ENCODE measurements at regions of chr3 and their contacts with region 1.

Region 1: GRCh38 chr3:185558395-185558794 is 6.0 kb upstream of the LIPH start:
- DNase-seq: no peak
- H3K4me3 Mint-ChIP-seq: no peak overlapping the region
- H3K27ac Mint-ChIP-seq: no peak overlapping the region
- H3K4me1 Mint-ChIP-seq: peaks cover 13% of the 10 kb centered on the region
- H3K27me3 Mint-ChIP-seq: peaks cover 2% of the 10 kb centered on the region

Region 2: DNA sequence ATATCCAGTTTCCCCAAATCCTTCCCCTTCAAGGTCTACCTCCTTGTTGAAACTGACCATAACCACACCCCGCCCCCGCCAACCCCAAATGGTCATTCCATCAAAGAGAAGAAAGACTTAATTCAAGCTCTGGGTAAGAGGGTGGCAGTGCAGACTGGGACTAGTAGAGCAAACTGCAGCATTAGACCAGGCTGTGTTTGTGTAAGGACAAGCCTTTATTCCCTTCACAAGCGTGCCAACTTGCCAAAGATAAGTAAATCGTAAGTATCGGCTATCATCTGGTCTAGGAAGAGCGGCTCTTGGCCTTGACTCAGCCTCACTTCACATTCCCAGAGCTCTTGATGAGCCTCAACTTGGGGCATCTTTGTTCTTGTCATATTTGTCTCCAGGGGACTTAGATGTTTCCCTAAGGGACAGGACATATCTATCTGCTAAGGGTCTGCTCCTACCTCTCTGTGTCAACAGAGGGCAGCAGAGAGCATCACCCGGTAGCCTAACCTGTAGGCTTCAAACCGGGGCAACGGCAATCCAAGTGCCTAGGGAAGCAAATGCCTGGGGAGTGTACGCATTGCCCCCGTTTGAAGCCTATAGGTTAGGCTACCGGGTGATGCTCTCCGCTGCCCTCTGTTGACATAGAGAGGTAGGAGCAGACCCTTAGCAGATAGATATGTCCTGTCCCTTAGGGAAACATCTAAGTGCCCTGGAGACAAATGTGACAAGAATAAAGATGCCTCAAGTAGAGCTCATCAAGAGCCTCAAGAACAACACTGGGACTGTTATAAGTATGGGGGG is 204.4 kb before region 1 on chr3:
- CTCF ChIA-PET with region 1: interaction called, 5 read pairs
- intact Hi-C with region 1: loop called (anchors 1 kb)
- DNase-seq: peak; percentile 83
- H3K4me3 Mint-ChIP-seq: no peak overlapping the region
- H3K27ac Mint-ChIP-seq: no peak overlapping the region
- H3K4me1 Mint-ChIP-seq: no peaks in the 10 kb centered on the region
- H3K27me3 Mint-ChIP-seq: peaks cover 24% of the 10 kb centered on the region

Region 3: GRCh38 chr3:185460719-185461350 is 97.6 kb before region 1 on chr3:
- CTCF ChIA-PET with region 1: interaction called, 12 read pairs
- intact Hi-C with region 1: loop called (anchors 1 kb)
- DNase-seq: no peak
- H3K4me3 Mint-ChIP-seq: no peak overlapping the region
- H3K27ac Mint-ChIP-seq: no peak overlapping the region
- H3K4me1 Mint-ChIP-seq: no peaks in the 10 kb centered on the region
- H3K27me3 Mint-ChIP-seq: no peaks in the 10 kb centered on the region

Region 4: DNA sequence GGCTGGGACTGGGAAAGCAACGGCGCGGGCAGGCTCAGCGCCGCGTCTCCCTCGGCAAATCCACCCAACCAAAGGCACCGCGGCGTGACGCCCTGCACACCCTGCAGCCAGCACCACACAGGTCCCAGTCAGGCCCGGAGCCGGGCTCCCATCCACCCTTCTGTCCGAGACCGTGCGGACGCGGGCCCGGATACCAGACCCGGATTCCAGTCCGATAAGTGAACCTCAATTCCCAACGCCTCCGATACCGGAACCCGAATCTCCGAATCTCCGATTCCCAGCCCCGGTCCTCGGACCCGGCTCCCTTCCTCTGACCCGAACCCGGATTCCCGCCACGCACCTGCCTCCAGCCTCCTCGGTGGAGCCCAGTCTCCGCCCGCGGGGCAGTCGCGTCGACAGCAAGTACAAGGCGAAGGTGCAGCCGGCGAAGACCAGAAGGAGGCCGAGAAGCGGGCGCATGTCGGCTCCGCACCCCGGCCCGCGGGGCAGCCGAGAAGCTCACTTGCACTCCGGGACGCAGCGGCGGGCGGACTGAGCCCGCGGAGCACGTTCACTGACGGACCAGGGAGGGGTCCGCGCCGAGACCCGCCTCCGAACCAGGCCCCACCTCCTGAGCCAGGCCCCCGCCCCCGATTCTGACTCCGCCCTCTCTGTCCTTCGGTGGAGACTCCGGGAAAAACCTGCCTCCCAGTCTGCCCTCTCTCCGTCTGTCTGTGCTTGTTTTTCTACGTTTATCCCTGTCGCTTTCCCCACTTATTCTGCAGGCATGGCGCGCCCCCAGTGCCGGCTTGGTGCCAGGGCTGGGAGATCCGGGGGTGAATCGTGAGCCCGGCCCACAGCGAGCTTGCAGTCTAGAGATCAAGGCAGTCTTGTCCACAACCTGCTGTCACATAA is 59.6 kb before region 1 on chr3 and contains the start of gene TMEM41A:
- CTCF ChIA-PET with region 1: interaction called, 7 read pairs
- intact Hi-C with region 1: loop called (anchors 1 kb)
- DNase-seq: peak; percentile 94
- H3K4me3 Mint-ChIP-seq: peak within 1 kb of the TSS; percentile 89
- H3K27ac Mint-ChIP-seq: peak within 1 kb of the TSS; percentile 78
- H3K4me1 Mint-ChIP-seq: peaks cover 17% of the 10 kb centered on the region
- H3K27me3 Mint-ChIP-seq: no peaks in the 10 kb centered on the region
- total RNA-seq, gene TMEM41A: 13.1 to 14.6 TPM

Region 5: GRCh38 chr3:185572183-185572582 is 13.8 kb after region 1 on chr3:
- CTCF ChIA-PET with region 1: interaction called, 12 read pairs
- intact Hi-C with region 1: no loop called
- DNase-seq: no peak
- H3K4me3 Mint-ChIP-seq: no peak overlapping the region
- H3K27ac Mint-ChIP-seq: no peak overlapping the region
- H3K4me1 Mint-ChIP-seq: peaks cover 2% of the 10 kb centered on the region
- H3K27me3 Mint-ChIP-seq: no peaks in the 10 kb centered on the region

Region 6: DNA sequence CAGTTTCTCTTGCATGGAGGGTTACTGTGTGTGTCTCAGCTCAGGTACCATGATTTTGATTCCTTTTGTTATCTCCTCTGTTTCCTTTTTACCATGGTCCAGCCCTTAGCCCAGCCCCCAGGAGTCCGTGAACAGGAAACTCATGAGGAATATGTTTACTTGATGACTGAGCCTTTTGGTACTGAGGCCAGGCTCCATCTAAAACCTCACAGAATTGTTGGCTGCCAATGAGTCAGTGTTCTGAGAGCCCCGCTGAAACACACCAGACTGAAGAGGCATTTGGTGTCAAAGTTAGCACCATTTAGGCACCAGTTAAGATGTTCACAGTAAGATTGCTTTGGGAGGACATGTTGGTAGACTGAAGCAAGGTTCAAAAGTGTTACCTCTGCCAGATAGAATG is 722.8 kb after region 1 on chr3:
- CTCF ChIA-PET with region 1: no interaction called
- intact Hi-C with region 1: no loop called
- DNase-seq: no peak
- H3K4me3 Mint-ChIP-seq: no peak overlapping the region
- H3K27ac Mint-ChIP-seq: no peak overlapping the region
- H3K4me1 Mint-ChIP-seq: no peaks in the 10 kb centered on the region
- H3K27me3 Mint-ChIP-seq: peaks cover 2% of the 10 kb centered on the region

Measured in activated naive CD4-positive, alpha-beta T cell treated with anti-CD3 and anti-CD28 coated beads for 36 hours (primary cell).